Right ventricle myocardium superior (tissue), 1 donor: ENCODE measurements at regions of chr10 and their contacts with region 1.

Region 1: DNA sequence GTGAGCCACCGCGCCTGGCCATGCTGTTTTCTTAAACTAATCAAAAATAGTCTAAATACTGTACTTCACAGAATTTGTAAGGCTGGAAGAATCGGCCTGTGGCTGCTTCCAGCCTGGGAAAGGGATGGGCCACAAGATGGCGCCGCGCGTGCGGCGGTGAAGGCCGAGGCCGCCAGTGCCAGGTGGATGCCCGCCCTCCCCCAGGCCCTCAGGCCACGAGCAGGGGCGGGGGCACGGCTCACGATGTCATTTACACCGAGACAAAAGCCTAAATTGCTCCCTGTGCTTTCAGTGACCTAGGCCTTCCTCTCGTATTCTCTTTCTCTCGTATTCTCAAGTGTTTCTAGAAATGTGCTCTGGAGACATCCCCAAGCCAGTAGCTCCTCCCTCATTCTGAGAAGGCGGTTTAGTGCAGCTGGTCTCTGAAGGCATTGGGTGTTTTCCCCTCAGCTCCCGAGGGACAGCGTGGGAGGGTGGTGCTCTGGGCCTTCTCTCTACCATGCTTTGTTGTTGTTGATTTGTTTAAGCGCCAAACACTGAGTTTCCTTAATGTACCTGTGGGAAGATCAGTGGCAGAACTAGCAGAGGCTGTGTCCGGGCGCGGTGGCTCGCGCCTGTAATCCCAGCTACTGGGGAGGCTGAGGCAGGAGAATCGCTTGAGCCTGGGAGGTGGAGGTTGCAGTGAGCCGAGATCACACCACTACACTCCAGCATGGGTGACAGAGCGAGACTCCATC is 68.4 kb downstream of the CDC123 start:
- DNase-seq: peak; percentile 88
- ATAC-seq: peak; percentile 90

Region 2: DNA sequence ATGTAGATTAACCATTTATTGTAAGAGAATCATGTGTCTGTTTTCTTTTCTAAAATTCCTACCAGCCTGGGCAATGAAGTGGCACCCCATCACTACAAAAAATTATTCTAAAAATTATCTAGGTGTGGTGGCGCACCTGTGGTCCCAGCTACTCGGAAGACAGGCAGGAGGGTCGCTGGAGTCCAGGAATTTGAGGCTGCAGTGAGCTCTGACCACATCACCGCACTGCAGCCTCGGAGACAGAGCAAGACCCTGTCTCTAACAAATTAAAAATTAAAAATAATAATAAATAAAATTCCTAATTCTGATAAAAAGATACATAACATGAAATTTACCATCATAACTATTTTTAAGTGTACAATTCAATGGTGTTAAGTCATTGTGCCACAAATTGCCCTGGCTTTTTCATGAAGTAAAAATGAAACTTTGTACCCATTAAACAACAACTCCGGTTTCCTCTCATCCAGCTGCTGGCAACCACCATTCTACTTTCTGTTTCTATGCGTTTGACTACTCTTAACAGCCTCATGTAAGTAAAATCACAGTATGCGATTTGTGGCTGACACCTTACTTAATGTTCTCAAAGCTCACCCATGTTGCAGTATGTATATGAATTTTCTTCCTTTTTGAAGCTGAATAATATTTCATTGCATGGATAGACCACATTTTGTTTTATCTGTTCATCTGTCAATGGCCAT is 632.3 kb before region 1 on chr10:
- intact Hi-C with region 1: no loop called
- DNase-seq: no peak
- ATAC-seq: no peak

Region 3: GRCh38 chr10:12348870-12349628 is 84.7 kb after region 1 on chr10 and contains the start of gene CAMK1D:
- intact Hi-C with region 1: no loop called
- DNase-seq: peak; percentile 90
- ATAC-seq: peak; percentile 81
- total RNA-seq, gene CAMK1D: 6.5 TPM

Region 4: DNA sequence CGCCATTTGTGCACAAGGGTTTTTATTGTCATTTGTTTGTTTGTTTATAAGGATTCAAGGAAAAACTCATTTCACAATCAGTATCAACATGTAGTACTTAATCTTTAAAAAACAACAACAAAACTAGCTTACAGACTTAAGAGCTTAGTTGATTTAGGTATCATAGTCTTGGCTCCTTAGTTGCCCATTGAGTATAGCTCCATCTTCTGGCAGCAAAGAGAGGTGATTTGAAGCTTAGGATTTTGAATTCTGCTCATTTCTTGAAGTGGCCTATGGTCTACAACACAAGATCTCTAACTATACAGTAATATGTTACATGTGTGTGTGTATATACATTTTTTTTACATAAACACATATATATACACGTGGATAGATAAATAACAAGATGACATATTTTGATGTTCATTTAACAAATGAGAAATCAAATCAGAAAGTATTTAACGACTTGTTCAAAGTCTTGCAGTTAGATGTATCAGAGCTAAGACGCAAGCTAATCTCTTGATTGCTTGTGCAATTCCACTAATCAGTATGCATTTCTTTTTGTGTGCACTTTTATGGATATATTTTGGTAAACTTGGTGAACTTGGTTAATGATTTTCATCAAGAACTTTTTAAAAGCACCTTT is 392.3 kb after region 1 on chr10:
- intact Hi-C with region 1: loop called (anchors 5 kb)
- DNase-seq: no peak
- ATAC-seq: peak; percentile 71

Region 5: DNA sequence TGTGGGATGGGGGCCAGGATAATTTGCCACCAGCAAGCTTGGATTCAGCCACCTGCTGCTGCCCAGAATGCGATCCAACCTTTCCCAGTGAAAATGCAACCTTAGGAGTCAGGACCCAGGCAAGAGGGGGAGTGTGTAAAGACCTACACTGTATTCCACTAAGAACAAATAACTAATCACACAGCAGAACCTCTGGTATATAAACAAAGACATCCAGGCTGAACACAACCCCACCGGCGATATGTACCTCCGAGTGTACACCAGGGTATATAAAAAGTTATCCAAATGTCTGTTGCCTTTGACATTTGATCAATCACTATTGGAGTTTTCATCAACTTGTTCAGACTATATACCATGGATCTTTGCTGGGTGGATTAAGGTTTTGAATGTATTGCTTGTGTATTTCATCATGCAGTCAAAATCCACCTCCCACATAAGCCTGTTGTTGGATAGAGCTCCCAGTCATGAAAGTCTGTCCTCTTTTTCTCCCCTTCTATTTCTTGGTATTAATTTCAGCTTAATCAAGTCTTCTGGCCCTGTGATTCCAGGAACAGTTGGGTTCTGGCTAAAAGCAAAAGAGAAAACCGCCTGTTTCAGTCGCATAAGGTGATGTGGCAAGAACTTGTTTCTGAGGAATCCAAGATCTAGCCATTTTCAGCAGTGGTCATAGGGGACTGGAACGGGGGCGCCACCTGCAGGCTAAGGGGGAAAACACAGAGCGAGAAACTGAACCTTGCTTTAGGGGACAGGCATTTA is 446.4 kb after region 1 on chr10:
- intact Hi-C with region 1: loop called (anchors 5 kb)
- DNase-seq: peak; percentile 83
- ATAC-seq: peak; percentile 84

Region 6: DNA sequence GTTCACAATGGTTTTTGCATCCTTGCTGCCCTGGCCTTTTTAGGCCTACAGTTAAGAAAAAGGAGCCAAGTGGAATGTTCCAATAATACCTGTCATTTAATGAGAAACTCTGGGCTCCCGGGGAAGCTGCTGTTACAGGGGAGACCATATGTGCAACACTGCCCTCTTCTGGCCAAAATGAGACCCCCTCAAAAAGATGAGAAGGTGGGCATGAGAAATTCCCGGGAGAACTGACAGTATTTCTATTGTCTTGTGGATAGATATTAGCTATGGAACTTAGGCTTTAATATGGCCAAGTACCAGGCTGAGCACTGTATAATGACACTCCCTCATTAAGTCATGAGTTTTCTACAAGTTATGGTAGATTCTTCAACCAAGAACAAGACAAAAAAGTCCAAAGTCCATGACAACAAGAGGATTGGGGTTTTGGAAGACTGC is 637.8 kb after region 1 on chr10:
- intact Hi-C with region 1: loop called (anchors 10 kb)
- DNase-seq: no peak
- ATAC-seq: no peak